Colonic mucosa (tissue), 4 donors: ENCODE measurements at regions of chr12 and their contacts with region 1.

Region 1: DNA sequence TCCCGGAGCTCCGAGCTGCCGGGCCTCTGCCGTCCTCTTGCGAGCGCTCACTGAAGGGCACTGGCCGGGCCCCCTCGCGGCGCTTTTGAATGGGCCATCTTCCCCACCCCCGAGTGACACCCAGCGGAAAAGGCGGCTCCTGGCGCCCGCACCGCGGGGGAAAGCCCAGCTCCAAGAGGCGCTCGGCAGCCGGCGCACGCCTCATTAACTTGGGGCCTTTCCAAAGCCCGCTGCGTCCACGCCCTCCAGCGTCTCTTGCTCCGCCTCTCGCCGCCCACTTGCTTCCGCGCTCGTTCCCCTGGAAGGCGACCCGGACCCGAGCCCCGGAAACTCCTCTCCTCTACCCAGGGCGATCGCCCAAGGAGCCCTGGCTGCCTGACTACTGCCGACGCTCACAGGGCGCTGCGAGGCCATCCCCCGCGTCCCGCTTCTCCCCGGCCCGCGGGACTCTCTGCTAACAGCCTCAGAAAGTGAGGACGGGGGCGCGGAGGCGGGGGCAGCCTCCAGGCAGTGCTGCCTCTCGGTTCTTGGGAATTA is at the start of gene PHLDA1:
- DNase-seq: peak; percentile 94
- H3K4me3 ChIP-seq: peak within 1 kb of the TSS; percentile 61
- H3K27ac ChIP-seq: peak within 1 kb of the TSS; percentile 90
- H3K4me1 ChIP-seq: no peaks in the 10 kb centered on the region
- H3K27me3 ChIP-seq: no peaks in the 10 kb centered on the region
- CTCF ChIP-seq: peak; percentile 42
- total RNA-seq, gene PHLDA1: 5.7 to 10.4 TPM

Region 2: DNA sequence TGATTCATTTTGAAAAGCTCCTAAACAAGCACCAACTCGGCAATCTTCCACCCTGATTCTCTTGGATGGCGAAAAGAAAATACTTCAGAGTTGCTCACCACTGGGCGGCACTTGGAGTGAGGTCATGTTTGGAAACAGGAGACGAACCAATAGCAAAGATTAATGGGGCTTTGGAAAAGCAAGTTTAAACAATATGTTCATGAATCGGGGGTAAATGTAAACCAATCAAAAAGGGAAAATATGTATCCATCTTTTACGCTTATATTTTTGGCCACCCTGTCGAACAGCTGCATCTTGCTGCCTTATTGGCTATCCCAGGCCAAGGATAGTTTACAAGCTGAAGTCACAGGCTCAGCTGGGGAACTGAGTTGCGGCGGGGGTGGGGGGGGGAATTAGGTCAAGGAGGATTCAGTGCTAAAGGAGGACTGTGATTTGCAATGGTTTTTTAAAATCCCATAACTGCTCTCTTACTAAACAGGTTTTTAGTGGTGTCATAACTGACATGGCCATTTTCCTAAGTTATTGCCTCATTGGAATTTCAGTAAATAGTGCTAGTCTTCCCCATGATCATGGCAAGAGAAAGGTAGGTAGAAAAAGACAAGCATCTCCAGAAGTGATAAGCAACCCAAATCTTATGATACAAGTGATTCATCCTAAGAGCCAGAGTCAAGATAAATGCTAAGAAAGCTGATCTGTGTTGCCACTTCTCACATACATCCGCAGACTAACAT is 210.6 kb before region 1 on chr12:
- intact Hi-C with region 1: loop called (anchors 10 kb)
- DNase-seq: peak; percentile 35
- H3K4me3 ChIP-seq: no peak overlapping the region
- H3K27ac ChIP-seq: no peak overlapping the region
- H3K4me1 ChIP-seq: peaks cover 4% of the 10 kb centered on the region
- H3K27me3 ChIP-seq: no peaks in the 10 kb centered on the region
- CTCF ChIP-seq: no peak

Region 3: DNA sequence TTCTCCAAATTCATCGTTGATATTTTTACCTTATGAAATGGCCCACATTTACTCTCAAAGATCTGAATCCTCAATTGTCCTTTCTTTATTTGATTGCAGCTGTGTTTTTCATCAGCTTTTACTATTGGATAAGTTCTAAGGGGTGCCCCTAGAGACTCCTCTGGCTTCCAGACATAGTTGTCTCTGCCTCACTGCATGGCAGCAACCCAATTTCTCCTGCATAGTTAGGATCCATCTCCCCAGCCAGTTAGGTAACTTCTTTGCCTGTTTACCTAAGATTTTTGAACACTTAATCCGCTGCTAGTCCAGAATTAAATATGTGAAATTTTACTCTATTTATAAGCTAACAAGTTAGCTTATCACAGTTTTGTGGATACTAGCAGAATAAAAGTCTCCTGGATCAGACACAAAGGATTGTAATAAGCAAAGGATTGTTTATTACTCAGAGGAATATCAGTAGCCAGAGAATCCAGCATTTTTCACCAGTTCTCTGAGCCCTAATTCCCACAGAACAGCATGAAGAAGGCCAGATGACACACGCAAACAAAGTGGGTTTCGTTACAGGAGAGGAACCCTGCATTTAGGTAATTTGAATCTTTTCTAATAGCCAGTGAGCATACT is 215.5 kb after region 1 on chr12:
- intact Hi-C with region 1: no loop called
- DNase-seq: no peak
- H3K4me3 ChIP-seq: no peak overlapping the region
- H3K27ac ChIP-seq: no peak overlapping the region
- H3K4me1 ChIP-seq: no peaks in the 10 kb centered on the region
- H3K27me3 ChIP-seq: no peaks in the 10 kb centered on the region
- CTCF ChIP-seq: no peak